PC-9 (cell line): ENCODE measurements at regions of chr4 and their contacts with region 1.

Region 1: DNA sequence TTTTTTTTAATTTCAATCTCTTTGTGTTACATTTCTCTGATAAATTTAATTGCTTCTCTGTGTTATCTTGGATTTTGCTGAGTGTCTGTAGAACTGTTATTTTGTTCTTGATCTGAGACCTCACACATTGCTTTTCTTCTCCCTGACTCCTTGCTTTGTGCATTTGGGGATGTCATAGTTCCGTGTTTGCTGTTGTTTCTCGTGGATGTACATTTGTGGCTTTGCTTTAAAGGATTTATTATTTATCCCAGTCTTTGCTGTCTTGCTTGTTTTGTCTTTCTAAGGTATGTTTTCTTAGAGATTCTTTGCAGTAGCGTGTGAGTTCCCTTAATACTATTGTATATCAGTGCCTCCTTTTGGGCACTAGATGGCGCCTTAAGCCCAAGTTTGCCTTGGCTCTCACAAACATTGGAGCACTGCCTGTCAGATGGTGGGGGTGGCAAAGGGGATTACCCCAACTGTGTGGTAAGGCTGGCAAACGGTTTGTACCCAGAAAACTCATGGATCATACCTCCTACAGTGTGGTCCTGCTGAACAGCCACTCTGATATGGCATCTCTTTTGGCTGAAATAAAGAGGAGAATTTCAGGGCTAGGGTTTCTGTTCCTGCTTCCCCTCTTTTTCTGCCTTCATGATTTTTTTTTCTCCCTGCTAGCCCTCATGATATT is 96.4 kb downstream of the PGRMC2 start:
- DNase-seq: peak; percentile 45 to 55
- H3K4me3 ChIP-seq: no peak overlapping the region
- H3K27ac ChIP-seq: no peak overlapping the region
- H3K4me1 ChIP-seq: no peaks in the 10 kb centered on the region
- H3K27me3 ChIP-seq: no peaks in the 10 kb centered on the region
- CTCF ChIP-seq: peak; percentile 89

Region 2: DNA sequence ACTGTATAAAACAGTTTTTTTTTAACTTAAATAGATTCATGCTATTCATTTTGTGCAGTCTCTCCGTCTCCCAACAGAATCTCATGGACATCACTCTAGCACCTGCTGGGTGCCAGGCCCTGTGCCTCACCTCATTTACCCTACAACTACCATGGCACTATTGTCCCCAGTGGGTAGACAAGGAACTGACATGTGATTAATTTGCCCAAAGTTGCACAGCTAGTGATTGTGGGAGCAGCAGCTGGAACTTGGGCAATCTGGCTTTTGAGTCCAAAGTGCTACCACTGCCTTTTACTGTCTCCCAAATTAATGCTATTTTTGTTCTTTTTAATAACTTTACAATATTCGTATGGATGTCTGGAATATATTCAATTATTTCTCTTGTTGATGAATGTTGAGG is 107.6 kb after region 1 on chr4:
- CTCF ChIA-PET with region 1: no interaction called
- POLR2A ChIA-PET with region 1: interaction called, 11 read pairs
- intact Hi-C with region 1: no loop called
- DNase-seq: no peak
- H3K4me3 ChIP-seq: no peak overlapping the region
- H3K27ac ChIP-seq: no peak overlapping the region
- H3K4me1 ChIP-seq: no peaks in the 10 kb centered on the region
- H3K27me3 ChIP-seq: no peaks in the 10 kb centered on the region
- CTCF ChIP-seq: no peak

Region 3: GRCh38 chr4:128322995-128323394 is 131.7 kb after region 1 on chr4:
- CTCF ChIA-PET with region 1: no interaction called
- POLR2A ChIA-PET with region 1: no interaction called
- intact Hi-C with region 1: no loop called
- DNase-seq: peak; percentile 68 to 91
- H3K4me3 ChIP-seq: peak overlapping the region; percentile 33; the same call in 1 of the 2 replicates
- H3K27ac ChIP-seq: peak overlapping the region; percentile 89
- H3K4me1 ChIP-seq: peaks cover 40% of the 10 kb centered on the region
- H3K27me3 ChIP-seq: no peaks in the 10 kb centered on the region
- CTCF ChIP-seq: no peak

Region 4: DNA sequence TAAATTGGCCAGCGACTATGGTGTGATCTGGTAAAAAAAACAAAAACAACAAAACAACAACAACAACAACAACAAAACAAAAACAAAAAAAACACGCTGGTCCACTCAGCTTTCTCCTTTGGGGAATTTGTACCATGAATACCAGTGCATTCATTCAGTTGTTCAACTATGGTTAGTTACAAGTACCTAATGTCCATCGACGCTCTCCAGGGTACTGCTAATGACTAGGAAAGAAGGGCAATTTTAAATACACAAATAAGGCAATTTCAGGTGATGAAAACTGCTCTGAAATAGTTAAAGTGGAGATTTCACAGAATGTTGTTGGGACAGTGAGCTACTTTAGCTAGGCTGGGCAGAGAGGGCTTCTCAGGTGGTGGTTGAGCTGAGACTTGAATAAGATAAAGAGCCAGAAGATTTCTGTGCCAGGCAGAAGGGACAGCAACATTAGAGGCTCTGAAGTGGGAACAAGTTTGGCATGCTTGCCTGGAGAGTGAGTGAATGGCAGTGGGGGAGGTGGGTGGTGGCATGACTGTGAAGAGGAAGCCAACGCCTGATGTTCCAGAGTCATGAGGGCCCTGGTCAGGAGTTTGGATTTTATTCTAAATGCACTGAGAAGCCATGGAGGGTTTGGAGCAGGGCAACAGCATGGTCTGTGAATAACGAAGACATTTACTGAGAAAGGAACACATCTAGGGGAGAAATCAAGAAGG is 142.2 kb after region 1 on chr4:
- CTCF ChIA-PET with region 1: no interaction called
- POLR2A ChIA-PET with region 1: no interaction called
- intact Hi-C with region 1: no loop called
- DNase-seq: no peak
- H3K4me3 ChIP-seq: no peak overlapping the region
- H3K27ac ChIP-seq: no peak overlapping the region
- H3K4me1 ChIP-seq: peaks cover 11% of the 10 kb centered on the region
- H3K27me3 ChIP-seq: no peaks in the 10 kb centered on the region
- CTCF ChIP-seq: no peak

Region 5: GRCh38 chr4:128600996-128601871 is 410.0 kb after region 1 on chr4:
- CTCF ChIA-PET with region 1: no interaction called
- POLR2A ChIA-PET with region 1: no interaction called
- intact Hi-C with region 1: no loop called
- DNase-seq: peak; percentile 63 to 81
- H3K4me3 ChIP-seq: no peak overlapping the region
- H3K27ac ChIP-seq: peak overlapping the region; percentile 66
- H3K4me1 ChIP-seq: peaks cover 30% of the 10 kb centered on the region
- H3K27me3 ChIP-seq: no peaks in the 10 kb centered on the region
- CTCF ChIP-seq: no peak

Region 6: DNA sequence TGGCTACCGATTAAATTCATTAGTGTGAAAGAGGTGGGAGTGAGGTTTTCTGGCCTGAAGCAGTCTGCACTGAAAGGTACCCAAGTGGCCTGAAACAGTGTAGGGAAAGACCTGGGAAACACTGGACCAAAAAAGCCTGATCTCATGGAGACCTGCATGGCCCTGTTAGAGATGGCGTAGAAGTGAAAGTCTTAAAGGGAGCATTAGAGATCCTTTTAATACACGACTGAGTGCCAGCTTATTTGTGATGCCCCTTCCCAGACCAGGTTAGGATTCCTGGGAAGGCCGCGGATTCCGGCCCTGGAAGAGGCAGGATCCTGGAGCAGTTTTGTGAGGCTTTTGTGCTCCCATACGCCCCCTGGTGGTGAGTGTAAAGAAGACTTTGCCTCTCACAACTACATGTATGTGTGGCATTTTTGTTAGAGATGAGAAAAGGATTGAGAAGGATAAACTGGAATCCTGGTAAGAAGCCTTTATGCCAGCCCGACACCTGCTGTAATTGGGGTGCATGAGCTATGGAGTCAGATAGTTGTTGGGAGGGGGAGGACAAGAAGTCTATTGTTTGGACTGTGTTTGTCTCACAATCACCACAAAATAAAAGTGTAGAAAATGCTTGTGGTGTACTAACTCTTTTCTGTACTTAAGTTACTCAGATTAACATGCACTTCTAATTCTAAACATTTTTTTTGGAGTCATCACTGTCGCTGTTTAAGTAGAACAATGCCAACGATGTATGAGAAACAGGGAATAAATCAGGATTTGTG is 672.2 kb after region 1 on chr4:
- CTCF ChIA-PET with region 1: no interaction called
- POLR2A ChIA-PET with region 1: no interaction called
- intact Hi-C with region 1: loop called (anchors 1 kb)
- DNase-seq: peak in 1 of 2 experiments; percentile 59
- H3K4me3 ChIP-seq: no peak overlapping the region
- H3K27ac ChIP-seq: no peak overlapping the region
- H3K4me1 ChIP-seq: no peaks in the 10 kb centered on the region
- H3K27me3 ChIP-seq: no peaks in the 10 kb centered on the region
- CTCF ChIP-seq: peak; percentile 86